ENCODE measurements at regions of chr19 and their contacts with region 1.

Region 1: DNA sequence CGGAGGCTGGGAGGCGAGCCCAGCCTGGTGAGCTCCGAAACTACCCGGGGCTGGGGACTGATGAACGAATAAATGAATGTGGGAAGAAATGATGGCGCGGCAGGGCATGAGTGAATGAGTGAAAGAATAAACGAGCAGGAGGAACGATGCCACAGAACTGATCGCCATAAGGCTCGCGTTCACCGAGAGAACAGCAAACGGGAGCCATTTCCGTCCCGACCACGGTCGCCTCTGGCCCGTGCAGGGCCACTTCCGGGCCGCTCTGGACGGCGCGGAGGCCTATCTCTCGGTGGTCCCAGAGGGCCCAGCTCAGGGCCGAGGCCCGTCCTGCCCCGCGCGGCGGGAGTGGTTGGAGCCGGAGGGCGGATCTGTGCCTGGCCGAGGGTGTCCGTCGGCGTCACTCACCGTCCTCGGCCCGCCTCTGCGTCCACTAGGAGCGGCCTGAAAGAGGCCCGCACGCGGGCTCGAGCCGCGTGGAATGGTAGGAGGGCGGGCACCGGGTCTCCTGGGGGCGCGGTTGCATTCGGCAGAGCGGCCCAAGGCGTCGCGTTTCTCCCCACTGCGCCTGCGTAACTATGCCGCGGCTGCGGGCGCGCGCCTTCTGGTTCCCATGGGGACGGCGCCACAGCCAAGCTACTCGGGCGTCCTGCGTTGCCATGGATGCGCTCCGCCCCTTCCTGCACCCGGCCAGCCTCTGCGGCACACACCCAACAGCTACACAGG is at the start of gene ZNF497:
- DNase-seq: peak; percentile 99
- total RNA-seq, gene ZNF497: 0.14 to 0.69 TPM

Region 2: GRCh38 chr19:56689198-56689597 is 1673.2 kb before region 1 on chr19:
- intact Hi-C with region 1: loop called in 1 of 2 experiments (anchors 10 kb)
- DNase-seq: no peak

Region 3: DNA sequence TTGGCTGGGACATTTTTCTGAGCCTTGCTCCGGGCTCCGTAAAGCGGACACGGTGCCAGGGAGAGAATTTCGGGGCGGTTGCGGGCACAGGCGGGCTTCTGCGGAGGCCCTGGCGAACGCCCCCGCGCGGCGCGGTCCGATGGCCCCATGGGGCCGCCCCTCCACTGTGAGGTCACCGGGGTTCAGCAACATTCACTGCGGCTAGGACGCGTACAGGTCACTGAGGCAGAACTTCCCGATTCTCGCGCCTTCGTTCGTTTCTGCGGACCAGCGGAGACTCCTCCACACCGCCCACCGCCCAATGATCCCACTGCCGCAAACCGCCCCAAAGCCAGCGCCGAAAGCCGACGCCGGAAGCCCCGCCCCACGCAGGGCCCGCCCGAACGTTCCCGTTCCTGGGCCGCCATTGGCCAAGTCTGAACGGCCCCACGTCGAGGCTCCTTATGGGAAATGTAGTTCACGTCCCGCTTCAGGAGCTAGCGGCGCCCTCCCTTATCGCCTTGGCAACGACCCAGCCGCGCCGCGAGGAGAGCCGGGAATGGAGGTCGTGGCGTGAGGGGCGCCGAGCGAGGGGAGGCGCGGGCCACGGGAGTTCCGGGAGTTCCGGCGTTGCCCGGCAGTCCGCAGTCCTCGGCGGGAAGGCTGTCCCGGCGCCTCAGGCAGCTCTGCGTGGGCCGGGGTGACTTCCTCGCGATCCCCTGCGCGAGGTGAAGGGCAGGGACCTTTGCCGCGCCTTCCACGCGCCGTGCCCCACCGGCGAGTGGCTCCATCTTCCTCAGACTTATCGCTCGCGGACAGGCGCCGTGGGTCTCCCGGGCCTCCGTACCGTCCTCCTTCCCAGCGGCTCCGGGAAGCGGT is 45.9 kb after region 1 on chr19 and contains the start of gene ZNF584:
- intact Hi-C with region 1: no loop called
- DNase-seq: peak; percentile 98
- total RNA-seq, gene ZNF584: 7.3 to 11.7 TPM

Measured in posterior vena cava (tissue), 2 donors.